CD14-positive monocyte (primary cell): ENCODE measurements at regions of chr10 and their contacts with region 1.

Region 1: DNA sequence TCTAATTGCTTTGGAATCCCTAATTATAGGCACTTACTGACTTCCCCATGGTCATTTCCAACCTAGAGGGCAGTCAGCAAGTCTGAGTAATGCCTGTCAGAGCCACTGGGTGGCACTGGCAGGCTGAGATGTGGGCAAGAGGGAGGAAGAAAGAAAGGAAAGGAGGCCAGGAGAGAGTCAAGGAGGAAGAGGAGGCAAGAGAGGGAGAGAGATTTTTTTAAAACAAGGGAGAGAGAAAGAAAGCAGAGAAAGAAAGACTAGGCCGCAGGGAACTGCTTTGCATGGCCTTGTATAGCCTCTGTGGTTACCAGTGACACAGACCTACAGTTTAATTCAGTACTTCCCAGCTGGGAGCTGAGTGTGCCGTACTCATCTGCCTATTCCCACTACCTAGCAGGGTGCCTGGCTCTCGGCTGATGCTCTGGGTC is 210.4 kb upstream of the ADO start:
- DNase-seq: peak; percentile 59 to 72 (median 68)
- H3K4me3 ChIP-seq: no peak overlapping the region
- H3K4me3 Mint-ChIP-seq: no peak overlapping the region
- H3K27ac ChIP-seq: no peak overlapping the region
- H3K27ac Mint-ChIP-seq: peak overlapping the region in 5 of 7 donors; percentile 21 to 87 (median 69)
- H3K4me1 ChIP-seq: peaks cover 7 to 11% of the 10 kb centered on the region in 2 donors
- H3K4me1 Mint-ChIP-seq: peaks cover 14% of the 10 kb centered on the region
- H3K27me3 ChIP-seq: no peaks in the 10 kb centered on the region
- H3K27me3 Mint-ChIP-seq: peaks cover 0 to 2% (median 0%) of the 10 kb centered on the region in 3 donors
- CTCF ChIP-seq: peak; percentile 97

Region 2: DNA sequence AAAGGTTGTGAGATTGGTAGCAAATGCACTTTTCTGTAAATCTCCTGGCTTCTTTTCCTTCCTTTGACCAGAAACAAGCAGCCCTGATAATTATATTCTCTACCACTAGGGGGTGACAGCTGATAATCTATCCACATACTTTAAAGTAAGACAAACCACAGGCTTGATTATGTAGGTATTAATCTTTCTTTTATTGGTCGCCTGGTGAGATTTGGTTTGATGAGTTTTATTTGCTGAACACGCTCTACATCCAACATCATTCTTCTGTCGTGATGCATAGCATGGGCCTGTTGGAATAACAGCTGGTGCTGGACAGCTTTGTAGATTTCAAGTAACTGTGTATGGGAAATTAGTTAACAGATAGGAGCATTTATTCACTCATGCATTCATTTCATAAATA is 156.4 kb before region 1 on chr10:
- intact Hi-C with region 1: loop called in 1 of 2 experiments (anchors 10 kb)
- DNase-seq: peak; percentile 40 to 68 (median 55)
- H3K4me3 ChIP-seq: no peak overlapping the region
- H3K4me3 Mint-ChIP-seq: no peak overlapping the region
- H3K27ac ChIP-seq: no peak overlapping the region
- H3K27ac Mint-ChIP-seq: no peak overlapping the region
- H3K4me1 ChIP-seq: peaks cover 0 to 10% of the 10 kb centered on the region in 2 donors
- H3K4me1 Mint-ChIP-seq: peaks cover 11% of the 10 kb centered on the region
- H3K27me3 ChIP-seq: peaks cover 0 to 8% of the 10 kb centered on the region in 2 donors
- H3K27me3 Mint-ChIP-seq: peaks cover 3 to 4% (median 3%) of the 10 kb centered on the region in 3 donors
- CTCF ChIP-seq: peak; percentile 85

Region 3: GRCh38 chr10:62637249-62638061 is 43.3 kb after region 1 on chr10:
- intact Hi-C with region 1: no loop called
- DNase-seq: peak; percentile 82 to 84 (median 82)
- H3K4me3 ChIP-seq: peak overlapping the region; percentile 9 to 66 (median 38)
- H3K4me3 Mint-ChIP-seq: no peak overlapping the region
- H3K27ac ChIP-seq: peak overlapping the region; percentile 95 to 99
- H3K27ac Mint-ChIP-seq: no peak overlapping the region
- H3K4me1 ChIP-seq: peaks cover 81 to 84% of the 10 kb centered on the region in 2 donors
- H3K4me1 Mint-ChIP-seq: no peaks in the 10 kb centered on the region
- H3K27me3 ChIP-seq: no peaks in the 10 kb centered on the region
- H3K27me3 Mint-ChIP-seq: peaks cover 0 to 6% (median 0%) of the 10 kb centered on the region in 3 donors
- CTCF ChIP-seq: no peak

Region 4: GRCh38 chr10:63083904-63084689 is 490.0 kb after region 1 on chr10:
- intact Hi-C with region 1: loop called in 1 of 2 experiments (anchors 5 kb)
- DNase-seq: peak; percentile 45 to 60 (median 57)
- H3K4me3 ChIP-seq: no peak overlapping the region
- H3K4me3 Mint-ChIP-seq: no peak overlapping the region
- H3K27ac ChIP-seq: no peak overlapping the region
- H3K27ac Mint-ChIP-seq: no peak overlapping the region
- H3K4me1 ChIP-seq: no peaks in the 10 kb centered on the region
- H3K4me1 Mint-ChIP-seq: no peaks in the 10 kb centered on the region
- H3K27me3 ChIP-seq: peaks cover 0 to 3% of the 10 kb centered on the region in 2 donors
- H3K27me3 Mint-ChIP-seq: peaks cover 9 to 14% (median 14%) of the 10 kb centered on the region in 3 donors
- CTCF ChIP-seq: peak; percentile 84

Region 5: GRCh38 chr10:63157845-63158624 is 563.9 kb after region 1 on chr10:
- intact Hi-C with region 1: loop called in 1 of 2 experiments (anchors 10 kb)
- DNase-seq: peak; percentile 65 to 81 (median 70)
- H3K4me3 ChIP-seq: no peak overlapping the region
- H3K4me3 Mint-ChIP-seq: no peak overlapping the region
- H3K27ac ChIP-seq: no peak overlapping the region
- H3K27ac Mint-ChIP-seq: peak overlapping the region in 1 of 7 donors; percentile 20
- H3K4me1 ChIP-seq: peaks cover 18 to 24% of the 10 kb centered on the region in 2 donors
- H3K4me1 Mint-ChIP-seq: peaks cover 20% of the 10 kb centered on the region
- H3K27me3 ChIP-seq: no peaks in the 10 kb centered on the region
- H3K27me3 Mint-ChIP-seq: peaks cover 0 to 2% (median 0%) of the 10 kb centered on the region in 3 donors
- CTCF ChIP-seq: peak; percentile 91